ENCODE measurements at regions of chr9 and their contacts with region 1.

Region 1: DNA sequence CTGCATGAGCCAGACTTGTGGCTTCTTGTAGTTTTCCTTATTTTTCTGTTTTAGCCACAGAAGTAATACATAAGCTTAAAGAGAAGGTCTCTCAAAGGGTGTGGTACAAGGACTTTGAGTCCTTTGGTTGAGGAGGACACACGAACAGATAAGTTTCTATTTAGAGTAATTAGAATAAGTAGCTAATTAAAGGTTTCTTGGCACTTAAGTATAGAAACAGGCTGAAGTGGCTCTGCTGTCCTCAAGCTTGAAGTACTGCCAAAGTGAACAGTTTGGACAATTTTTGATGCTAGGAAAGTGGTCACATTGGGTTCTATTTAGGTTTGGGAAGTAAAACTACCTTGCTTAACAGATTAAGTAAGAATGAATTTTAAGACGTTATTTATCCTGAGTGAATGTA is 278.3 kb upstream of the MPDZ start:
- DNase-seq: no peak
- ATAC-seq: peak; percentile 77

Region 2: DNA sequence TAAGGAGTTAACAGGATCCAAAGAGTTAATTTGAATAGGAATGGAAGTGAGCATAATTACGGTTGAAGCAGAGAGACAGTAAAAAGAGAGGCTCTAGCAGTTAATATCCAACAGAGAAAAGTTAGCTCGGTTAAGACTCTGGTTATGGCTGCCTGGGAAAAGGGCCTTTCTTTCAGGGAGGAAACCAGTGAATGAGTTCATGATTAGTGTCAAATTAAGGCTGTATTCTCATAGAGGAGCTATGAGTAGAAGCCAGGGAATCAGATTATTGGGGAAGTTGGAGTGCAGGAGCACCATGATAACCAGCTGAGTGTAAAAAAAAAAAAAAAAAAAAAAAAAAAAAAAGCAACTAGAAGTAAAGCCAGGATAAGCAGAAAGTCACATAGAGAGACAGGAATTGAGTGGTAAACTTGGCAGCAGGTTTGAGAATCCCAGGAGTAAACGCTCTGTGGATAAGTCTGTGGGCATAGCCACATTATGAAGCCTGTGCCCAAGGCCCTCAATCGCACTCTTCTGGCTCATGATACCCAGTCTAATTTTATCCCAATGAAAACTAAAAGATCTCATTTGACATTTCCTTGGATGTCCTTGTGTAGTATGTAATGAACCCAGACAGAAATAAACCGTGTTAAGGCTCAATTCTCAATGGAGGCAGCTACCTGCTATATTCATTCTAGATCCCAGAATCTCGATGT is 94.4 kb after region 1 on chr9:
- intact Hi-C with region 1: loop called (anchors 2 kb)
- DNase-seq: no peak
- ATAC-seq: peak; percentile 95

Region 3: DNA sequence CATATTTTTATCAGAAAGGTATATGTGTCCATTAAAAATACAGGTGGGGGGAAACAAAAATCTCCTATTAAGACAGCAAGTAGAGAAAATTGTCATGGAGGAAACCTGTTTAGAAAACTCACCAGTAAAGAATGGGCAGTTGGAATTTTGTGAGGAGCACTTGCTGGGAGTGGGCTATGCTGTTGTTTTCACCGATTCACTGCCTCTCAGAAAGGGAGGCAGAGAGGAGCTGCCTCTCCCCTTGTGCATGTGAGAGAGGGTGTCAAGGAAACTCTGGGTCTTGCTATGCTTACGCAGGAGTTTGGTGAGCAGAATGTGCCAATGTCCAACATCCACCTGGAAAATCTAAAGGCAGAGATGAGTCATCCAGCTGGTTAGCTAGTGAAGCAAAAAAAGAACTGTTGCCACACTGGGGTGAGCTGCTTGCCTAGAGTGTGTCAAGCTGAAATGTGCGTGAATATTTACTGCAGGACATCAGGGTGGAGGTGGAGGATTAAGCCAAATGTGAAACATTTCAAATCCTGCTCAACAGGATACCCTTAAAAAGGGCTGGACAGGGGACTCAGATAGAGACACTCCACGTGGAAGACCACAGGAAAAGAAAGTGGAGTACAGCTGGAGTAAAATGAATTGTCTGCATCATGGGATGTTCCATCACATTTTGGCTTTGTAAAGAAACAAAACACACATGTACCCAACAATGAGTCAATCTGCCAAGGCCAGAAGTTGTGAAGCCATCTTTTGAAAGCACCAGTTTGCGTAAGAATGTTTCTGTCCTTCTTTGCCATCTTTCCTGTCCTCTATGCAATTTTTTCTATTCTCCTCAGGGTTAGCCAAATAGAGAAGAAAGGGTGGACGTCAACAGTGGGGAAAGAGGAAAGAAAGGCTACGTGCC is 171.4 kb after region 1 on chr9:
- intact Hi-C with region 1: no loop called
- DNase-seq: no peak
- ATAC-seq: no peak

Region 4: DNA sequence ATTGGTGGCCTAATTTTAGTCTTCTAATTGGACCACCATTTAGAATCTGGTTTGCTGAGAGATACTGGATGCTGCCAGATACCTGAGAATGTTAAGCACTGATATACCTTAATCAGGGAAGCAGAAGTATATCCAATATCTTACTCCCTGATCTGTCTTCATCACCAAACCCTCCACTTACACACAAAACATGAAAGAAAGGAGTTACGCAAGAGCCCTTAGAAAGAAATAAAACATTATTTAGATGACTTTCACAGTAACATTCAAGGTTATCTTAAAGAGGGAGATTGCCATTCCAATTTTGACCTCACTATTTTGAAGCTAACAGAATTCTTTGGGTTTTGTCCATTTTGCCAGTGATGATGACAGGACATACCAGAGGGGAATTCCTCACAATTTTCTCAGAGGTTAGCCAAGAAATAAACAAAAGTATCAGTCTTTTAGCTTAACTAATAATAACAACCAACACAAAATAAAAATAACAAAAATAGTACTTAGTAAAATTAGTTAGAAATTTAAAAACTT is 260.1 kb after region 1 on chr9:
- intact Hi-C with region 1: no loop called
- DNase-seq: no peak
- ATAC-seq: peak; percentile 34

Region 5: DNA sequence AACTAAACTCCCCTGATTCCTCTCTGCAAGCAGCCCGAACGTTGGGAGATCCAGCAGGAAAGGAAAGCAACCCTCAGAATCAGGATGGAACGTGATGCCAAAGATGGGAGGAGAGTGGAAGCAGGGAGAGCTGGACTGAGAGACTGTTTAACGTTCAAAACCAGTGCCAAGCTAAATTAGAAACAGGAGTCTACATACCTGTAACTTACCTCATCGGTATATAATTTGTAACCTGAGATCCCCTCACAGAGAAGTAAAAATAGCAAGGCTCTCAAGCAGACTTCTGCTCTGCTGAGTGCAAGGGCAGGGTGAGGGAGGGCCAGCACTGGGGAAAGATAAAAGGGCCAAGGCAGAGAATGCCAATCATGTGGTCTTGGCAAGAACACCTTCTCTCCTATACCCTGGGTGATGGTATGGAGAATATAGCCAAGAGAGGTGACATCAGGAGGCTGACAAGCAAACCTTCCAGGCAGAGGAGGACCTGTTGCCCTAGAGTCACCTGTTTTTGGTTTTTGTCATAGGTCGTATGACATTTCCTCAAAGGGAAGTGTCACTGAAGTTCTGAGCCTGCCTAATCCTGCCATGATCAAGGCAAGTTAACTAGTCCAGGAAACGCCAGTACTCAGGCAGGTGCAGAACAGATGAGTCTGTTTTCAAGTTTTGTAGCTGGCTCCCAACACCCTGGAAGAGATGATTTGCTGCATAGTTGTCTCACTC is 284.2 kb after region 1 on chr9:
- intact Hi-C with region 1: loop called (anchors 5 kb)
- DNase-seq: peak; percentile 49
- ATAC-seq: peak; percentile 92

Region 6: GRCh38 chr9:14021871-14022525 is 464.3 kb after region 1 on chr9:
- intact Hi-C with region 1: loop called (anchors 5 kb)
- DNase-seq: no peak
- ATAC-seq: no peak